PC-3 (cell line): ENCODE measurements at regions of chr10 and their contacts with region 1.

Region 1: DNA sequence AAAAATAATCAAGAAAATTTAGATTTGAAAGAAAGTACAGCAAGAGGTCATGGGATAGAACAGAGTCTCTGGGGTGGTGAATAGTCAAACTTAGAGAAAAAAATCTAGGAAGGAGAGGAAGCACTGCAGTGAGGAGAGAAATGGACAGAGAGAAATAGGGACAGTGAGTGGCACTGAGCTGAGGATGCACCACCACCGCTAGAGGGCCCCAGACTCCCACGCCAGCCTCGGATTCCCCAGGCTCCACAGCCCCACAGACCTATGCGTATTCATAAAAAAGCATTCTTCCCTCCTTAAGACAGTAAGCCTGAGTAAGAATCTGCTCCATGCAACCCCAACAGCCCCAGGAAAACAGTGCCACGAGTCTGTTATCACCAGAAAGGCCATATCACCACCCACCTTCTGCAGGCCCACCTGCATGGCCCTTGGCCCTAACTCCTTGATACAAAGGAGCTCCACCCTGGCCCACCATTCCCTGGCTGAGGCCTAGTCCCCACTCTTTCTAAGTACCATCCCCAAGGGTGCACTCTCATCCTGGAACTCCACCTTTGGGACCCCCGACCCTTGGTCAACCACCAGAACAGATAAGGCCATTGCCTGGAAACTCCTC is 91.0 kb downstream of the ALOX5 start:
- DNase-seq: peak; percentile 81
- ATAC-seq: peak; percentile 99
- H3K4me3 ChIP-seq: no peak overlapping the region
- H3K27ac ChIP-seq: no peak overlapping the region
- H3K4me1 ChIP-seq: peaks cover under 1% of the 10 kb centered on the region; the same call in 1 of the 2 replicates
- H3K27me3 ChIP-seq: no peaks in the 10 kb centered on the region
- CTCF ChIP-seq: peak; percentile 97

Region 2: DNA sequence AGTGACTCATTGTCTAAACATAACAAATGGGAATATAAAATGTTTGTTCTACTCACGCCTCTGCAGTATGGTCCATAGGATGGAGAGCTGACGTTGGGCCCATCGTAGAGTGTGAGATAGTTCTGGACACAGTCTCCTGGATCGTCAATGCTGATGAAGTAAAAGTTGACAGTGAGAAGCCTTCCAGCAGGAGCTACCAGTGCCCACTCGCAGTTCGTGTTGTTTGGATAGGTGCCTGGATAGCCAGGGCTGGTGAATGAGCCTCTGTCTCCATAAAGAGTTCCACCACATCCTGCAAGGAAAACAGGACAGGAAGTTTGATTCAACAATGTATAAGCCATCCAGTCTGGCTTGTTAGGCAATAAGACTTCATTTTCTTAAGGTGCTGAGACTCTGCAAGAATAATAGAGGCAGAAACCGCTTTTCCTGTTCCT is 229.2 kb before region 1 on chr10:
- CTCF ChIA-PET with region 1: no interaction called
- POLR2A ChIA-PET with region 1: no interaction called
- intact Hi-C with region 1: loop called (anchors 2 kb)
- DNase-seq: peak; percentile 83
- ATAC-seq: peak; percentile 82
- H3K4me3 ChIP-seq: peak overlapping the region; percentile 28; the same call in 1 of the 2 replicates
- H3K27ac ChIP-seq: peak overlapping the region; percentile 64
- H3K4me1 ChIP-seq: peaks cover 15% of the 10 kb centered on the region
- H3K27me3 ChIP-seq: no peaks in the 10 kb centered on the region
- CTCF ChIP-seq: no peak

Region 3: GRCh38 chr10:45249978-45250693 is 214.9 kb before region 1 on chr10:
- CTCF ChIA-PET with region 1: interaction called, 9 read pairs
- POLR2A ChIA-PET with region 1: no interaction called
- intact Hi-C with region 1: loop called (anchors 5 kb)
- DNase-seq: peak; percentile 97
- ATAC-seq: peak; percentile 88
- H3K4me3 ChIP-seq: peak overlapping the region; percentile 64
- H3K27ac ChIP-seq: no peak overlapping the region
- H3K4me1 ChIP-seq: no peaks in the 10 kb centered on the region; the same call in 1 of the 2 replicates
- H3K27me3 ChIP-seq: no peaks in the 10 kb centered on the region
- CTCF ChIP-seq: peak; percentile 82

Region 4: GRCh38 chr10:45594276-45595106 is 129.4 kb after region 1 on chr10:
- CTCF ChIA-PET with region 1: no interaction called
- POLR2A ChIA-PET with region 1: no interaction called
- intact Hi-C with region 1: loop called (anchors 2 kb)
- DNase-seq: peak; percentile 95
- ATAC-seq: peak; percentile 86
- H3K4me3 ChIP-seq: peak overlapping the region; percentile 81
- H3K27ac ChIP-seq: peak overlapping the region; percentile 25; the same call in 1 of the 2 replicates
- H3K4me1 ChIP-seq: peaks cover 13% of the 10 kb centered on the region
- H3K27me3 ChIP-seq: no peaks in the 10 kb centered on the region
- CTCF ChIP-seq: no peak

Region 5: DNA sequence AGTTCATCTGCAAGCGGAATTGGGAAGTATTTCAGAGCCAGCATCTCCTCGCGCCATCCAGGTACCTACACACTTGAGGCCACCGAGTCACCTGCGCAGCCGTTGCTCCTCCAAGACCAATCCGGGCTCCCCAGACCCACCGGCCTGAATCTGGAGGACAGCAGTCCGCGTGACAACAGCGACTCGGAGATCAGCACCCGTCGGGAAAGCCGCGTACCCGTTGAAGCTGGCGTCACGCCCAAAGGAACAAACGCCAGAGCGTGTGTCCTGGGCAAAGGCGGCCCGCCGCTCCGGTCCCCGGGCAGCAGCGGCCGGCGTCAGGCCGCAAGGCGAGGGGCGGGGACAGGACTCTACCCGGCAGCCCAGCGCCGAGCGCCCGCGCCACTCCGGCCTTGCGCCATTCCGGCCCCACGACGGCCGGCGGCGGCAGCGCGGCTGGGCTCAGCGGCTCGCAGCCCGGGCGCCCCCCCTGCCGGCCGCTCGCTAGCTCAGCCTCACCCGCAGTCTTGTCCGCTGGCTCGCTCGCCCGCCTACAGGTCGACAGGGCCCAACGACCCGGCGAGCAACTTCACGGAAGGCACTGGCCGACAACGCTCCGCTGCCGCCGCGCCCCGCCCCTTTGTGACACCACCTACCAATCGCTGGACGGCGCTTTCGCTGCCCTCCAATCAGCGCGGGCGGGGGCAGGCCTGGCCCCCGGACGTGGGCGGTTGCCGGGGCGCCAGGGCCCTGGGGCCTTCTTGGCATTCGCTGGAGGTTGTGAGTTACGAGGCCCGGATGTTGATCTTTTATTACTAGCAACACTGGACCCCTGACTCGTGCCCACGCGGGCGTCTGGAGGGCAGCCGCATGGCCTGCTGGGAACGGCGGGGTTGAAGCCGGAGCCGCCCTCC is 207.4 kb after region 1 on chr10 and contains the start of gene ZFAND4:
- CTCF ChIA-PET with region 1: no interaction called
- POLR2A ChIA-PET with region 1: no interaction called
- intact Hi-C with region 1: loop called (anchors 10 kb)
- DNase-seq: peak; percentile 90
- ATAC-seq: peak; percentile 95
- H3K4me3 ChIP-seq: peak within 1 kb of the TSS; percentile 77
- H3K27ac ChIP-seq: peak within 1 kb of the TSS; percentile 60
- H3K4me1 ChIP-seq: peaks cover 4% of the 10 kb centered on the region
- H3K27me3 ChIP-seq: no peaks in the 10 kb centered on the region
- CTCF ChIP-seq: peak; percentile 48; the same call in 1 of the 2 replicates
- total RNA-seq, gene ZFAND4: 7.9 and 8.7 TPM in 2 replicates

Region 6: DNA sequence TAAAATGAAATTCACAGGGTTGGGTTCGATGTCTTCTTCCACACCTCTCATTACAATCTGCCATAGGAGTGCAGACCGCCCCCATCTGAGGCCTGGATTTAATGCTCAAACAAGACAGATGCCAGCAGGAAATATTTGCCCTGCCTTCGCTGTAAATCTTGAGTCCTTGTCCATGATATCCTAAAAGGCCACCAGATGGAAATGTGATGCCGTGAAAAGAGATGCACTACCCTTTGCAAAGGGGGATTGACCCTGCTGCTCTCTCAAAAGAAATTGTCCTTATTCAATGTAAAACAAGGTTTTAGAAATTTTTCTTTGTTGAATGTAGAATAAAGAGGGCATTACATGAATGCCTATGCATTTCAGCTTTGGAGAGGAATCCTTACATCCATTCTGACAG is 344.8 kb after region 1 on chr10:
- CTCF ChIA-PET with region 1: no interaction called
- POLR2A ChIA-PET with region 1: no interaction called
- intact Hi-C with region 1: loop called (anchors 1 kb)
- DNase-seq: peak; percentile 31
- ATAC-seq: peak; percentile 70
- H3K4me3 ChIP-seq: no peak overlapping the region
- H3K27ac ChIP-seq: no peak overlapping the region
- H3K4me1 ChIP-seq: no peaks in the 10 kb centered on the region
- H3K27me3 ChIP-seq: no peaks in the 10 kb centered on the region
- CTCF ChIP-seq: peak; percentile 55